ENCODE measurements at regions of chr7 and their contacts with region 1.

Region 1: GRCh38 chr7:73738612-73739374 is at the start of gene ABHD11:
- DNase-seq: peak; percentile 95
- H3K4me3 Mint-ChIP-seq: peak within 1 kb of the TSS; percentile 94
- H3K27ac Mint-ChIP-seq: peak within 1 kb of the TSS; percentile 93
- H3K4me1 Mint-ChIP-seq: peaks cover 14% of the 10 kb centered on the region
- H3K27me3 Mint-ChIP-seq: peaks cover 2% of the 10 kb centered on the region
- total RNA-seq, gene ABHD11: 18.9 and 24.3 TPM in 2 replicates

Region 2: GRCh38 chr7:73433924-73434700 is 304.7 kb before region 1 on chr7:
- intact Hi-C with region 1: loop called (anchors 2 kb)
- DNase-seq: peak; percentile 2
- H3K4me3 Mint-ChIP-seq: peak overlapping the region; percentile 77
- H3K27ac Mint-ChIP-seq: no peak overlapping the region
- H3K4me1 Mint-ChIP-seq: no peaks in the 10 kb centered on the region
- H3K27me3 Mint-ChIP-seq: peaks cover 7% of the 10 kb centered on the region

Region 3: GRCh38 chr7:73557108-73557396 is 181.7 kb before region 1 on chr7:
- intact Hi-C with region 1: loop called (anchors 1 kb)
- DNase-seq: peak; percentile 92
- H3K4me3 Mint-ChIP-seq: peak overlapping the region; percentile 94
- H3K27ac Mint-ChIP-seq: peak overlapping the region; percentile 79
- H3K4me1 Mint-ChIP-seq: peaks cover 38% of the 10 kb centered on the region
- H3K27me3 Mint-ChIP-seq: peaks cover 8% of the 10 kb centered on the region

Region 4: GRCh38 chr7:73623798-73624668 is 114.8 kb before region 1 on chr7 and contains the start of gene MLXIPL:
- intact Hi-C with region 1: loop called (anchors 1 kb)
- DNase-seq: peak; percentile 38
- H3K4me3 Mint-ChIP-seq: no peak within 1 kb of the TSS
- H3K27ac Mint-ChIP-seq: no peak within 1 kb of the TSS
- H3K4me1 Mint-ChIP-seq: no peaks in the 10 kb centered on the region
- H3K27me3 Mint-ChIP-seq: peaks cover 49% of the 10 kb centered on the region
- total RNA-seq, gene MLXIPL: not detected in 2 replicates

Region 5: GRCh38 chr7:73718905-73719805 is 19.6 kb before region 1 on chr7 and contains the start of gene STX1A:
- intact Hi-C with region 1: loop called (anchors 1 kb)
- DNase-seq: peak; percentile 72
- H3K4me3 Mint-ChIP-seq: peak within 1 kb of the TSS; percentile 88
- H3K27ac Mint-ChIP-seq: peak within 1 kb of the TSS; percentile 89
- H3K4me1 Mint-ChIP-seq: peaks cover 34% of the 10 kb centered on the region
- H3K27me3 Mint-ChIP-seq: peaks cover 15% of the 10 kb centered on the region
- total RNA-seq, gene STX1A: 24.9 and 26.7 TPM in 2 replicates

Region 6: DNA sequence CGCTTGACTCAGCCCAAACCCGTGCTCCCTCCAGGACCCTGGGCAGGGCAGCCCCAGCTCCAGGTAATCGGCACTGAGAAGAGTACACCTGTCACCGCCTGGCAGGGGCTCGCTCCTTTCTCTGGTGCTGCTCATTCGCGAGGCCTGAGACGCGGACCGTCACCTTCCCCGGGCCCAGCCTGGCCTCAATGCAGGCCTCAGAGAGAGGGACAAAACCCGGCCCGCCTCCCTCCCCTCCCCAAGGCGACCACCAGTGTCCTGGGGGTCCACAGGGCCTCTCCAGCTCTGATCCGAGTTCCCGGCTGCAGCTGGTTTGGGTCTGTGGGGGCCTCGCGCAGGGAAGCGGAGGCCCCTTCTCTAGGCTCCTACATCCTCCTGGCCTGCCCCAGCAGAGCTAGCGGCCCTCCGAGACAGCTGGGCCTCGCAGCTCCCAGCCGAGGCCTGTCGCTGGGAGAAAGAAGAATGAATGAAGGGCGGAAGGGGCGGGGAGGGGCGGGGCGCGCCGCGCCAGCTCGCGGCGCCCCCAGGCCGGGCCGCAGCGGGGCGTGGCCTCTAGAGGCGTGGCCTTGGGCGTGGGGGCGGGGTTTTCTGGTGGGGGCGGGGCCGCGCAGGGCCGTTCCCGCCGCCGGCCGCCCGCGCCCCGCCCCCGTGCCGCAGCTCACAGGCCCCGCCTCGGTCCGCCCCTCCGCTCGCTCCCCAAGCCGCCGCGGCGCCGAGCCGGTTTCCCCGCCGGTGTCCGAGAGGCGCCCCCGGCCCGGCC is 344.5 kb after region 1 on chr7 and contains the start of gene LIMK1:
- intact Hi-C with region 1: loop called (anchors 10 kb)
- DNase-seq: peak; percentile 78
- H3K4me3 Mint-ChIP-seq: peak within 1 kb of the TSS; percentile 88
- H3K27ac Mint-ChIP-seq: peak within 1 kb of the TSS; percentile 89
- H3K4me1 Mint-ChIP-seq: peaks cover 12% of the 10 kb centered on the region
- H3K27me3 Mint-ChIP-seq: peaks cover 2% of the 10 kb centered on the region
- total RNA-seq, gene LIMK1: 24.3 and 25.2 TPM in 2 replicates

Region 7: DNA sequence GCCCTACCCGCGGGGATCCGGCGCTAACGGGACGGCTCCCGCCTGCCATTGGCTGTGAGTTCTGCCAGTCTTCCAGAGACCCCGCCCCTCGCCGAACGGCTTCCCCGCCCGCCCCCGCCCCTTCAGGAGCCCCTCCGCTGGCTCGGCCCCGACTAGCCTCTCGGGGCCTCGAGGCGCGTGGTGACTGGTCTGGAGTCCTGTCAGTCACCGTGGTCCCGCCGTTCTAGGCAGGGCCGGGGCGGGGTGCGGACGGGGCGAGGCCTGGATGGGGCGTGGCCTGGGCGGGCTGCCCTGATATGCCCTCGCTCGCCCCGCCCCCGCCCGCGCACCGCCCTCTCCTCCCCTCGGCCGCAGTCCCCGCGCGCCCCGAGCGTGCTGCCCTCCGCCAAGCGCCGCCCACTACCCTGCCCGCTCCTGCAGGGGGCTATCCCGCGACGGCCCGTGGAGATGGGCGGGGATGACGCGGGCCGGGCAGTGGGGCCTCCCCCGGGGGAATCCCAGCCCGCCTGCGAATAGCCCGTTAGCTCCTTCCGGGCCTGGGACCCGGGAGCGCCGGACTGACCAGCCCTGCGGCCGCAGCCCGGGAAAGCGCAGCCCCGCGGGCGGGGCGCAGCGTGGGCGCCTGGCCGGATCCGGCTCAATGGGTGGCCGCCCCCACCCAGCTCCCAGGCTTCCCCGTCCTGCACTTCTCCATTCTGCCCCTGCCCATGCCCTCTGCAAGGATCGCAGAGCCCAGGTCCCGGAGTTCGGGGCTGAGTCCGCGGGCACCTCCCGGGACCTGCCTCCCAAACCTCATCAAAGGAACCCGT is 2000.4 kb after region 1 on chr7:
- intact Hi-C with region 1: loop called (anchors 2 kb)
- DNase-seq: peak; percentile 98
- H3K4me3 Mint-ChIP-seq: peak overlapping the region; percentile 93
- H3K27ac Mint-ChIP-seq: peak overlapping the region; percentile 96
- H3K4me1 Mint-ChIP-seq: peaks cover 21% of the 10 kb centered on the region
- H3K27me3 Mint-ChIP-seq: peaks cover 17% of the 10 kb centered on the region

Measured in activated T-helper 1 cell treated with anti-CD3 and anti-CD28 coated beads, Interleukin-12 subunit alpha, Interleukin-12 subunit beta, Interleukin-2, Interleukin-4 antibody, amounts not matched to agents 30 ng/mL and 10 ng/mL and 1 ng/mL, durations not matched to agents 14 hours and 24 hours and 36 hours (primary cell).